ENCODE measurements at regions of chr16 and their contacts with region 1.

Region 1: DNA sequence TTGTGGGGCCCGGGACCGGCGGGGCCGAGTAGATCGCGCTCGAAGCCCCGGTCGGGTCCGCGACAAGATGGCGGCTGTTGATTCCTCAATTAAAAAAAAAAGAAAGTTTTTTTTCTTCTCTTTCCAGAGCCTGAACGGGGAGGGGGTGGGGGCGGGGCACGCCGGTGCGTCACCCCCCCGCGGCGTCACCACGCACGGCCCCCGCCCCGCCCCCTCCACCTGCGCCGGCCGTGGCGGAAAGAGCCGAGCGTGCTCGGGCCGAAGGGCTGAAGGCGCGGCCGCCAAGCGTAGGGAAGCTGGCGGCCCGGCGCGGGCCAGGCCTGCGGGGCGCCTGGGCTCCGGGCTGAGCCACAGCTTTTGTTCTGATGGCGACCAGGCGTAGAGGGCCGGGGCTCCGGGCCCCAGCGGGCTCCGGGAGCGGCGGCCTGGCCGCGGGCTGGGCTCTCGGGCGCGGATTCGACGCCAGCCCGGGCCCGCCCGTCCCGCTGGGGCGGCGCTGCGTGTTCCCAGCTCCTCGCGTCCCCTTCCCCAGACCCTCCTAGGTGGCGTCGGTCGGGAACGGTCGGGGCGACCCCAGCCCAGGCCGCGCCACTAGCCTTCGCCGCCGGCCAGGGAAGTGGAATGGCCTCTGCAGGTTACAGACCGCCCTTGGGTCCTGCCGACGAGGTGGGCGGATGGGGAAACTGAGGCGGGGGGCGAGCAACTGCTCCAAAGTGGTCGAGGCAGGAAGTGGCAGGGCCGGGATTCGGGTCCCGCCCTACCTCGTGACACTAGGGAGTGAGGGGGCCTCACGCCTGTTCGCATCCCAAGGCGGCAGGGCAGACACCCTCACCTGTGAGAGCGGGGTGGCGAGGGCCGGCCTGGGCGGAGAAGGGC is at the start of gene CREBBP:
- DNase-seq: peak; percentile 84 to 89
- ATAC-seq: peak; percentile 89 to 96 (median 92)
- H3K4me3 ChIP-seq: peak within 1 kb of the TSS; percentile 64 to 96 (median 88)
- H3K27ac ChIP-seq: peak within 1 kb of the TSS; percentile 74 to 93 (median 84)
- H3K4me1 ChIP-seq: peaks cover 11 to 40% (median 33%) of the 10 kb centered on the region in 9 donors
- H3K27me3 ChIP-seq: no peaks in the 10 kb centered on the region
- CTCF ChIP-seq: peak in 1 of 9 donors; percentile 8
- total RNA-seq, gene CREBBP: 29.5 to 51.5 (median 41.4) TPM

Region 2: DNA sequence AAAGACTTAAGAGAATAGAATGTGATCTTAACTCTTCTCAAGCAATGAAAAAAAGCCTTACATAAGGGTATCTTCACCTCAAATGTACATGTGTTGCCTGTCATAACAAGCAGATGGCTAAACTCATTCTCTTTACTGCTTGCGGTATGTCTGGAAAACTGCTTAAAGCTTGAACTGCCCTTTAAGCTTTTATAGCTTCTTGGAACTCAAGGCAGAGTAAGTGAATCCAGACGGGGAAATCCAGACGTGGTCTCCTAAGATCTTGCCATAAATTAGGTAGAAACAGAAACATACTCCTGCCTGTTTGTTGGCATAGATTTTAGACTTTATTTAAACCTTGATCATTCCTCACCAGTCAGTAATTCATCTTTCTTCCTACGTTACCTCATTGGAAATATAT is 360.4 kb before region 1 on chr16:
- intact Hi-C with region 1: loop called in 2 of 10 experiments (anchors 10 kb)
- DNase-seq: no peak
- ATAC-seq: no peak
- H3K4me3 ChIP-seq: no peak overlapping the region
- H3K27ac ChIP-seq: no peak overlapping the region
- H3K4me1 ChIP-seq: no peaks in the 10 kb centered on the region
- H3K27me3 ChIP-seq: no peaks in the 10 kb centered on the region
- CTCF ChIP-seq: no peak

Region 3: GRCh38 chr16:3690470-3690928 is 190.4 kb before region 1 on chr16:
- intact Hi-C with region 1: loop called in 9 of 10 experiments (anchors 1 to 10 kb)
- DNase-seq: peak; percentile 91 to 92
- ATAC-seq: peak; percentile 90 to 97 (median 94)
- H3K4me3 ChIP-seq: peak overlapping the region in 8 of 10 donors; percentile 18 to 51 (median 43)
- H3K27ac ChIP-seq: peak overlapping the region in 7 of 10 donors; percentile 7 to 64 (median 53)
- H3K4me1 ChIP-seq: peaks cover 4 to 24% (median 17%) of the 10 kb centered on the region in 9 donors
- H3K27me3 ChIP-seq: no peaks in the 10 kb centered on the region
- CTCF ChIP-seq: peak; percentile 83 to 98 (median 95)

Region 4: DNA sequence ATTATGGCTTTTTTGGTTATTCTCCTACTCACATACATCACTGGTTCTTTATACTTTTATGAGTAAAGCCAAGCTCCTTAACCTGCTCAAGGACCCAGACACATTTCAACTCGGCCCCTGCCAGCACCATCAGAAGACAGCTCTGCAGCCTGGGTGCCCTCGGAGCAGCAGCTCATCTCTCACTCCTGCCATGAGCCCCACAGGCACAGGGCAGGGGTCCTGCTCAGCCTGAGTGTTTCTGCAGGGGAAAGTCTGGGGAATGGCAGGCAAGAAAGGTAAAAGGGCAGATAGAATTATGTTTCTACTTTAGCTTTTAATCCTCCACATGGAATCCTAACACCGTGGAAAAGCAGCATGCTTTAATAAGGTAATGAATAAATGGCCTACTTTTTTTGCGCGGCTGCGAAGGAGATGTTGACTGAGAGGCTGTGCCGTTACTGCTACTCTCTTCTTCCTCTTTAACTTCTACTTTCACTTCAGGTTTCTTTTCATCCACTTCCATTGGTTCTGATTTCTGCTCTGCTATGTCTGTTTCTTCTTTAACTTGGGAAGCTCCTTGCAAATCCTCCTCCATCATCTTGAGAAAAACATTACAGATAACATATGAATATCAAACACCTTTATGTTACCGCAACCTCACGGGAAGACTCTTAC is 113.4 kb before region 1 on chr16:
- intact Hi-C with region 1: loop called in 5 of 10 experiments (anchors 5 to 10 kb)
- DNase-seq: no peak
- ATAC-seq: no peak
- H3K4me3 ChIP-seq: no peak overlapping the region
- H3K27ac ChIP-seq: no peak overlapping the region
- H3K4me1 ChIP-seq: peaks cover 0 to 15% (median 6%) of the 10 kb centered on the region in 9 donors
- H3K27me3 ChIP-seq: no peaks in the 10 kb centered on the region
- CTCF ChIP-seq: no peak

Region 5: DNA sequence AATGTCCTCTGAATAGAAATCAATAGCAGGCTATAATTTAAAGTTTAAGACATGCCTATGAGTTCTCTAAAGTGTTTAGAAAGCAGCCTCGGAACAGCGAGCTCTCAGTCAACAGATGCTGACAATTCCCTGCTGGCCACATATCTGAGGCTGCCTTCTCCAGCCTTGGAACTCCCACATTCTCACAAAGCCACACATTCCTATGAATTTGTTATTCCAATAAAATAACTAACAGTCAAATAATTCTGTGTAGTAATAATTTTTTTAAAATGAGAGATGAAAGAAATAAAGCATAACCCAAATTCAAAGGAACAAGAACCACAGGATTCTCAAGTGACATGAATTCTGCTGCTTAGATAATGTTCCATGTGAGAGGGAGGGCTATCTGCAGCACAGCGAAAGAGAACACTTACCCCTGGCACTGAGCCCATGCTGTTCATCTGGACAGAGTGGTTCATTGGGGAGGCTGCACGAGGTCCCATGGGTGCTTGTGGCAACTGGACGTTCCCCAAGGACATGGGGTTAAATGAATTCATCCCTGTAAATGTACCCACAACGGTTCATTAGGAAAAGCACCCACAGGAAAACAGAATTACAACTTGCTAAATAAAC is 106.6 kb before region 1 on chr16:
- intact Hi-C with region 1: loop called in 7 of 10 experiments (anchors 5 to 10 kb)
- DNase-seq: peak; percentile 52 to 81
- ATAC-seq: peak; percentile 57 to 95 (median 86)
- H3K4me3 ChIP-seq: no peak overlapping the region
- H3K27ac ChIP-seq: peak overlapping the region in 6 of 10 donors; percentile 4 to 58 (median 34)
- H3K4me1 ChIP-seq: peaks cover 6 to 47% (median 30%) of the 10 kb centered on the region in 9 donors
- H3K27me3 ChIP-seq: no peaks in the 10 kb centered on the region
- CTCF ChIP-seq: no peak

Region 6: DNA sequence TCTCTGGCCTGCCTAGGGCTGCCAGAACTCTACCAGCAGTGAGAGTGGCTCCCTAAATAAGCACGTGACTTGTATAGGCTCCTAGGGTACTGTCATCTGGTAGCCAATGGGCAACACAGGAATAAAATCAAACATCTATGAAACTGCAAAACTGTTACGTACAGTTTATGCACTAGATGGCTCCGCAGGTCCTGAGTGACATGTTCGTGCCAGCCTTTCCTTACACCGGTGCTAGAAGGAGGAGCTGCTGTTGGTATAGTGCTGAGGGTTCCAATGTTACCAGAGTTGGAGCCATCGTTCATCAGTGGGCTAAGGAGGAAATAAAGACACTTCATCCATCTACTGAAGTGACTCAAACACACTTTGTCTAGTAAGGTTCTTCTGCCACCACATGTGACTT is 100.3 kb before region 1 on chr16:
- intact Hi-C with region 1: loop called in 6 of 10 experiments (anchors 5 to 10 kb)
- DNase-seq: no peak
- ATAC-seq: peak in 2 of 8 donors; percentile 34 to 48
- H3K4me3 ChIP-seq: no peak overlapping the region
- H3K27ac ChIP-seq: no peak overlapping the region
- H3K4me1 ChIP-seq: peaks cover 0 to 15% (median 4%) of the 10 kb centered on the region in 9 donors
- H3K27me3 ChIP-seq: no peaks in the 10 kb centered on the region
- CTCF ChIP-seq: peak in 1 of 9 donors; percentile 23

Region 7: GRCh38 chr16:3797904-3798811 is 82.7 kb before region 1 on chr16:
- intact Hi-C with region 1: loop called in 2 of 10 experiments (anchors 5 kb)
- DNase-seq: no peak
- ATAC-seq: no peak
- H3K4me3 ChIP-seq: no peak overlapping the region
- H3K27ac ChIP-seq: peak overlapping the region in 1 of 10 donors; percentile 1
- H3K4me1 ChIP-seq: peaks cover 5 to 86% (median 48%) of the 10 kb centered on the region in 9 donors
- H3K27me3 ChIP-seq: no peaks in the 10 kb centered on the region
- CTCF ChIP-seq: no peak

Measured in heart right ventricle (tissue), 16 donors.